Activated CD4-positive, alpha-beta memory T cell treated with anti-CD3 and anti-CD28 coated beads for 36 hours (primary cell): ENCODE measurements at regions of chr12 and their contacts with region 1.

Region 1: GRCh38 chr12:123713398-123713797 is 1.2 kb downstream of the ATP6V0A2 start:
- DNase-seq: peak; percentile 35
- H3K4me3 Mint-ChIP-seq: peak overlapping the region; percentile 85
- H3K27ac Mint-ChIP-seq: peak overlapping the region; percentile 89
- H3K4me1 Mint-ChIP-seq: peaks cover 47% of the 10 kb centered on the region
- H3K27me3 Mint-ChIP-seq: no peaks in the 10 kb centered on the region

Region 2: DNA sequence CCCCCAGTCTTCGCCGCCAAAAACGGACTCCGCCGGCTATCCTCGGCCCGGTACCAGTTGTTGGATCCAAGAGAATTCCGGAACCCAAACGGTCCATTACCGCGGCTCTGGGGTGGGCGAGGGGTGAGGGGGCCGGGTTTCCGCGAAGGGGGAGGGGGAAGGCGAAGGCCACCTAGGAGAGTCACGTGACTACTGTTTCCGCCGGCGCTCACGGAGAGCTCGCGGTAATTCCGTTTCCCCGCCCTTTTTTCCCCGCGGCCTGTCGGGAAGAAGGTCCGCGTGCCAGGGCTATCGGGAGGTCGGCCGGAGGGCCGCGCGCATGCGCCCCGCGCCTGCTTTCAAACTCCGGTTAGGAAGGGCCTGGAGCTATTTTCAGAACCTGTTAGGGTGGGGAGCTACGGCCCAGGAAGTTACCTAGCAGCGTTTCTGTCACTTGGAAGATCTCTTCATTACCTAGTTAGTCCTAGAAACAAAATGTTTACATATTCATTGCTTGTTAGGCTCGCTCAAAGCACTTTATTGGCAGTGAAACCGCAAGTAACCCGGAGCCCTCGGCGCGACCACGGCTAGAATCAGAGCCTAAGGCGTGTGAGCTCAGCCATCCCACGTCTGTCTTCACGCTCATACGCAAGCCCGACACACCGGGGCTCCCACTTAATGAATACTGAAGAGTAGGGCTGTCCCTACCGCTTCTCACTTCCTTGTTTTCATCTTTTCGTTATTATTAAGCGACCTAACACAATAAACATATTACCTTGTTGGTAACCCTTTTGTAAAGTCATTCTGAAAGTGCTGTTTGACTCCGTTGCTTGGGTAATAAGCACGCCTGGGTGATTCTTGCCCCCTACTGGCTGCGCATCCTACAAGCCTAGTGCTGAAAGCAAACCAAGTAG is 348.1 kb before region 1 on chr12:
- CTCF ChIA-PET with region 1: no interaction called
- POLR2A ChIA-PET with region 1: interaction called, 4 read pairs
- intact Hi-C with region 1: loop called (anchors 2 kb)
- DNase-seq: peak; percentile 99
- H3K4me3 Mint-ChIP-seq: peak overlapping the region; percentile 88
- H3K27ac Mint-ChIP-seq: peak overlapping the region; percentile 99
- H3K4me1 Mint-ChIP-seq: peaks cover 11% of the 10 kb centered on the region
- H3K27me3 Mint-ChIP-seq: no peaks in the 10 kb centered on the region

Region 3: DNA sequence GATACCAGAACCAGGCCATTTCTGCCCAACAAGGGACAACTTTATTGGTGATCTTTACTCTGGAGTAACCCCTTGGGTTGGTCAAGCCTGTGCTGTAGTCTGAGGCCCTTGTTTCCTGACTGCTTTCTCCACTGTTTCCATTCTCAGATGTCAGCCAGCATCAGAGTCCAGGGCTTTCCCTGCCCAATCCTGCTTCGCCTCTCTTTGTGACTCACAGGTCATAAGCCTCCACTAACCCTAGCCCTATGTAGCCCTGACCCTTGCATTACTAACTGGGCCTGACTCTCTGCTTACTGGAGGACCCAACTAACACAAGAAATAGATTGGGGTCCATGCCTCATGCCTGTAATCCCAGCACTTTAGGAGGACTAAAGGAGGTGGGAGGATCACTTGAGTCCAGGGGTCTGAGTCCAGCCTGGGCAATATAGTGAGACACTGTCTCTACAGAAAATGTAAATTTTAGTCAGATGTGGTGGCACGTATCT is 264.1 kb before region 1 on chr12:
- CTCF ChIA-PET with region 1: no interaction called
- POLR2A ChIA-PET with region 1: no interaction called
- intact Hi-C with region 1: no loop called
- DNase-seq: peak; percentile 18
- H3K4me3 Mint-ChIP-seq: peak overlapping the region; percentile 27
- H3K27ac Mint-ChIP-seq: peak overlapping the region; percentile 95
- H3K4me1 Mint-ChIP-seq: peaks cover 29% of the 10 kb centered on the region
- H3K27me3 Mint-ChIP-seq: no peaks in the 10 kb centered on the region

Region 4: DNA sequence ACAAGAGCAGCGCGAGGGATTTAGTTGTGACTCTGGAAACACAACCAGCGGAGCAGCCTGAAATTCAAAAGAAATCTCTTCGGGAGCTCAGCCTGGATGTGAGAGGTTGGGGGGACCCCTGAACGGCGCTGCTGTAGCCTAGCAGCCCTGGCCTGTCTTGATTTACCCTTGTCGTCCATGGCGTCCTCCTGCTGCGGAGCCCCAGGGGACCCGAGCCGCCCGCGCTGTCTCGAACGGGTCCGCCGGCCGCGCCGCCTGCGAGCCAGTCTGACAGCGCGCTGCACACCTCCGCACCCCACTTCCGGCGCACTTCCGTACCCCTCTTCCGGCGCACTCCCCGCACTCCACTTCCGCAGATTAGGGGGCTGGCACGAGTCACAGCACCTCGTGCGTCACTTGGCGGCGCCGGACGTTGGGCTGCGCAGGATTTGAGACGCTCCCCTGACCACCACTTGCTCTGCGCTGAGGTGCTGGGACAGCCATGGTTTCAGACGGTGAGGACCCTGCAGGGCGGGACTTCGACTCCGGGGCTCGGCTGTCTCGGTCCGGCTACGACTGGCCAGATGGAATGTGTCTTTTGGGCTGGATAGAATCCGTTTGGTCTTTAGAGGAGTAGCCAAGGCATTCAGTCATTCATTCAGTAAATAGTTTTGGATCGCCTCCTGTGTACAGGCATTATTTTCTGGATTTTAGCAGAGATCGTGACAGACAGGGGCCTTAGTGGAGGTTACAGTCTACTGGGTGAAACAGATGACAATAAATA is 79.8 kb before region 1 on chr12 and contains the starts of genes EIF2B1 and GTF2H3:
- CTCF ChIA-PET with region 1: interaction called, 4 read pairs
- POLR2A ChIA-PET with region 1: interaction called, 8 read pairs
- intact Hi-C with region 1: loop called (anchors 1 kb)
- DNase-seq: peak; percentile 99
- H3K4me3 Mint-ChIP-seq: peak within 1 kb of the TSS; percentile 97
- H3K27ac Mint-ChIP-seq: peak within 1 kb of the TSS; percentile 96
- H3K4me1 Mint-ChIP-seq: peaks cover 28% of the 10 kb centered on the region
- H3K27me3 Mint-ChIP-seq: no peaks in the 10 kb centered on the region
- total RNA-seq, gene EIF2B1: 51.7 to 61.9 TPM
- total RNA-seq, gene GTF2H3: 57.2 to 58.4 TPM

Region 5: DNA sequence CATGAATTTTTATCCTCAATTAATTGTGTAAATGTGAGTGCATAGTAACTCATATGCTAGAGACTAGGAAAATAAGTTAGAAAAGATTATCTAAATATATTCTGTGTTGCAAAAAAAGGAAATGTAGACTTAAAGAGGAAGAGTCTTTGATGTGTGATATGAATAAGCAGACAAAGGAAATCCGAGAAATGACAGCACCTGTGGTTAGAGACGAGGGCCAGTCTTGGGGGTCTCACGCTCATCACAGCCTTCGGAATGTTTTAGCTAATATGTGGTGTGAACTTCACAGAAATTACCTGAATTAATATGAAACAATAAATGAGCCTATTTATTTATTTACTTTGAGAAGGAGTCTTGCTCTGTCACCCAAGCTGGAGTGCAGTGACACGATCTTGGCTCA is 10.4 kb after region 1 on chr12:
- CTCF ChIA-PET with region 1: interaction called, 5 read pairs
- POLR2A ChIA-PET with region 1: interaction called, 10 read pairs
- intact Hi-C with region 1: loop called (anchors 1 kb)
- DNase-seq: no peak
- H3K4me3 Mint-ChIP-seq: no peak overlapping the region
- H3K27ac Mint-ChIP-seq: no peak overlapping the region
- H3K4me1 Mint-ChIP-seq: peaks cover 36% of the 10 kb centered on the region
- H3K27me3 Mint-ChIP-seq: no peaks in the 10 kb centered on the region

Region 6: DNA sequence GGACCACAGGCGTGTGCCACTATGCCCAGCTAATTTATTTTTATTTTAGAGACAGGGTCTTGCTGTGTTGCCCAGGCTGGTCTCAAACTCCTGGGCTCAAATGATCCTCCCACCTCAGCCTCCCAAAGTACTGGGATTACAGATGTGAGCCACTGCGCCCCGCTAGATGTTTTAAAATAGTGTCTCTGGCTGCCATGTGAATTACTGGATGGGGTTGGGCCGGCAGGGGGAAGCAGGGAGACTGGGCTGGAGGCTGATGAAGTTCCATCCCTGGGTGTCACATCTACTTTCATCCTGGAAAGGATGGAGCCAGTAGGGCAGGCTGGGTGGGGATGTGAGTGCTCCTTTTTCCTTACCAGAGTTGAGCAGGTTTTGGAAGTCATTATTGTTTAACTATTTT is 94.8 kb after region 1 on chr12:
- CTCF ChIA-PET with region 1: no interaction called
- POLR2A ChIA-PET with region 1: interaction called, 3 read pairs
- intact Hi-C with region 1: loop called (anchors 1 kb)
- DNase-seq: no peak
- H3K4me3 Mint-ChIP-seq: no peak overlapping the region
- H3K27ac Mint-ChIP-seq: no peak overlapping the region
- H3K4me1 Mint-ChIP-seq: peaks cover 11% of the 10 kb centered on the region
- H3K27me3 Mint-ChIP-seq: peaks cover 25% of the 10 kb centered on the region

Region 7: DNA sequence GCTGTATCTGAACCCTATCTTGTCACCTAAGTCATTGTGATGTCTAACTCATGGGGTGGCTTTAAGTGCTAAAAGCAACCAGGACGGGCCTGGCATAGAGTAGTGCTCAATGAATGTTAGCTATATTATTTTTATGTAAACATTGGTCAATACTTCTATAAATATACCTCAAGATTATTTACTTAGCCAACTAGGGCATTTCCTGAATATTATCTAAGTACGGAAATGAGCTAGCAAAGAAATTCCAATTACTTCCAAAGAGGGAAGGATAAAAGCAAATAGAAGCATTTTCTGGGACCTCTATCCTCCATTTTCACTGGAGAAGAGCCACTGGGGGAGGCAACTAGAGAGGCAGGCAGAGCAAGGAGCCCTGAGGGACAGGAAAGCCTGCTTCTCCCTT is 238.6 kb after region 1 on chr12:
- CTCF ChIA-PET with region 1: no interaction called
- POLR2A ChIA-PET with region 1: no interaction called
- intact Hi-C with region 1: no loop called
- DNase-seq: no peak
- H3K4me3 Mint-ChIP-seq: no peak overlapping the region
- H3K27ac Mint-ChIP-seq: no peak overlapping the region
- H3K4me1 Mint-ChIP-seq: no peaks in the 10 kb centered on the region
- H3K27me3 Mint-ChIP-seq: no peaks in the 10 kb centered on the region

Region 8: DNA sequence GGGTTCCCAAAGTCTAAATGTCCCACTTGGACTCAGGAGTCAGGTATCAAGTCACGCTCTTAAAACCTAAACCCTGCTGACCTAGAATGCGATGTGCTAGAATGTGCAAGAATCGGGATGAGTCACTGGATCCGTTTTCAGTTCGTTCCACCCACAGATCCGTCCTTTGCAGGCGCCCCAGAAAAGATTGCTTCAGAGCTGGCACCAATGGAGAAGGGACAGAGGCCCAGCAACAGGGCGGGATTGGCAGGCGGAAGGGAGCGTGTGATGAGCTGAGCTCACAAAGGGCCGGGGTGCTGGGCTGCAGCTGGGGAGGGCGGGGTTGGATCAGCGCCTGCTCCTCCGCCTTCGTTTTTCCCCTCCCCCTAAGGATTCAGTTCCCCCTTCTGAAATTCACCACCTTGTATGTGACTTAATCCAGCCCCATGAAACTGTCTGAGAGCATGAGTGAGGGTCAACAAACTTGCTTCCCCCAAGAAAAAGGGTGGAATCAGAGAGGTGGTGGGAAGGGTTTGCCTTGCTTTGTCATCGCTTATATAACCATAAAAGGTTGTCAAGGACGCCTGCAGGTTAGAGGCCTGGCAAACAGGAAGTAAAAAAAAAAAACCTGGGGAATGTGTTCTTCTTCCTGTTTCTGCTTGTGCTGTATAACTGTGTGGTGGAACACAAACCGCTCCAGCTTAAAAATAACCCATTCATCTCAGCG is 1203.9 kb after region 1 on chr12:
- CTCF ChIA-PET with region 1: no interaction called
- POLR2A ChIA-PET with region 1: no interaction called
- intact Hi-C with region 1: loop called (anchors 2 kb)
- DNase-seq: peak; percentile 97
- H3K4me3 Mint-ChIP-seq: peak overlapping the region; percentile 100
- H3K27ac Mint-ChIP-seq: peak overlapping the region; percentile 100
- H3K4me1 Mint-ChIP-seq: peaks cover 93% of the 10 kb centered on the region
- H3K27me3 Mint-ChIP-seq: peaks cover 15% of the 10 kb centered on the region